Mammary epithelial cell (primary cell): ENCODE measurements at regions of chr2 and their contacts with region 1.

Region 1: DNA sequence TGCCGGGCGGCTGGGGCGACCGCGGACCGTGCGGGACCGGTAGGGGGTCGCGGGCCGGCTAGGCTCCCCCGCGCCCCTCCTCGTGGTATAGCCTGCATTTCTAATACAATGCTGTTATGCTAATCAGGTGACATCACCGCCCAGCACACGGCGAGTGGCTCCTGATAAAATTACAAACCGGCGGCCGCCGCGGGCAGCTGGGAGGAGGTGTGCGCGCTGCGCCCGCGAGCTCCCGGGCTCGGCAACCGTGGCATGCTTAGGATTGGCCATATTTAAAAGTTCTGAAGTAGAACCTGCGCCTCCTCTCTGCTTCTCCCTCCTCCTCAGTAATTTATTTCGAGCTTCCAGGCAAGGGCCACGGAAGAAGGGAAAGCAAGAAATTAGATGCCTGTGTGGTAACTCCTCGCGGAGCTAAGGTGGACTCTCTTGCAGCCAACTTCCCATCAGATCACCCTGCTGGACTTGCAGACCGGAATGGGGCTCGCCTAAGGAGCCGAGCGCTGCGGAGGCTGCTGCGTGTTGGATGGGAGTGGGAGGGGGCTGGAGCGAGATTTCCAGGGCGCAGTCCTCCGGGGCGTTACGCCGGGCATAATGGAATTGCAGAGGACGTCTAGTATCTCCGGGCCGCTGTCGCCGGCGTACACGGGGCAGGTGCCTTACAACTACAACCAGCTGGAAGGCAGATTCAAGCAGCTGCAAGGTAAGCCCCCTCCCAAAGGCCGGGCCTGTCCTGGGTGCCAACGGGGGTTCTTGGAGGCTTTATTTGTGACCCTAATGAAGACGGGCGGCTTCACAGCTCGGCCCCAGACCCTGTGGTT is 102.3 kb downstream of the SPTBN1 start:
- DNase-seq: peak; percentile 79
- H3K4me3 ChIP-seq: peak overlapping the region; percentile 75 to 87 (median 80)
- H3K27ac ChIP-seq: peak overlapping the region; percentile 97
- H3K4me1 ChIP-seq: peaks cover 41% of the 10 kb centered on the region
- H3K27me3 ChIP-seq: no peaks in the 10 kb centered on the region
- CTCF ChIP-seq: no peak

Region 2: DNA sequence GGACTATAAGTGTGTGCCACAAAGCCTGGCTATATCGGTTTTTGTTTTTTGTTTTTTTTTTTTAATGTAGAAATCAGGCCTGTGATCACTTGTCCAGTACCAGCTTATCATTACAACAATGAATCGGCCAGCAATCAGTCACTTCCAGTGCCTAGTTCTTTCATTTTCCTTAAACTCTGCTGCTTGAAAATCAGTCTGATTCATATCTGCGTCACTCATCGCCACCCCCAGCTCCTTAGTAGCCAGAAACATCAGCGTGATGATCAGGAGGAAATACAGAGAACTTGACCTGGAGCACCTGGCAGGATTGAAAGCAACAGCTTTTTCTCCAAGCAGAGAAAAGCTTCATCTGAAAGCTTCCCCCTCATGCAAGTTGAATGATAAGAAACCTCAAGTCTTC is 26.8 kb before region 1 on chr2:
- CTCF ChIA-PET with region 1: no interaction called
- dilution Hi-C with region 1: loop called (anchors 5 kb)
- in situ Hi-C with region 1: no loop called
- intact Hi-C with region 1: loop called (anchors 1 kb)
- DNase-seq: peak; percentile 97
- H3K4me3 ChIP-seq: no peak overlapping the region
- H3K27ac ChIP-seq: peak overlapping the region; percentile 100
- H3K4me1 ChIP-seq: peaks cover 35% of the 10 kb centered on the region
- H3K27me3 ChIP-seq: no peaks in the 10 kb centered on the region
- CTCF ChIP-seq: no peak

Region 3: DNA sequence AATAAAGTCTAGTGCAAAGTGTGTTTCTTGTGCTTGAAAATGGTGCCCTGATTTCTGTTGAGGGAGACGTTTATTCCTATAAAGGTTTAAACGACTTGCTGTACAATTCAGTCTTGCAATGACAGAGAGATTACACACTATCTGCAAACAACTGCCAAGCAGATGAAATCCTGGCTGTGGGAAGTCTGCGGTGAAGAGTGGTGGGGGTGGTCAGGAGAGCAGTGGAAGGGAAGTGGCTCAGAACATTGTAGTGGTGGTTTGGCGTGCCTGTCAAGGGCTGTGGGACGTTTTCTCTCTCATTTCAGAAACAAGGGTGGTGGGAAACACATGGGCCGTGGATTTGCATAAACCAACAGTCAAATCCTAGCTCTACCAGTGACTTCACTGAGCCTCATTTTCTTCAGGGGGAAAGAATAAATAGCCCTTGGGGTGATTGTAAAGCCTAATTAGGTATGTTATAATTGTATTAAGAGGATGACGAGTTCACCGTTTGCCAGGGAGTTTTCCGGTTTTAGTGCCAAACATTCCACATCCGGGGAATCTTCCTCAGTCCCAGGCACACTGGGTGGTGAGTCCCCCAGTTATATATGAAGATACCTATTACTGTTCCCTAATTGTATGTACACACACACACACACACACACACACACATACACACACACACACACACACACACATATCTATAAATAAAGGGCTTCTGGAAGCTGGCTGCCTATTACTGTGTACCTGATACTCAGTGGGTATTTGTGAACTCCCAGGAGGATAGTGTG is 12.7 kb after region 1 on chr2:
- CTCF ChIA-PET with region 1: no interaction called
- dilution Hi-C with region 1: no loop called
- in situ Hi-C with region 1: no loop called
- intact Hi-C with region 1: loop called (anchors 1 kb)
- DNase-seq: peak; percentile 70
- H3K4me3 ChIP-seq: no peak overlapping the region
- H3K27ac ChIP-seq: peak overlapping the region; percentile 96
- H3K4me1 ChIP-seq: peaks cover 68% of the 10 kb centered on the region
- H3K27me3 ChIP-seq: no peaks in the 10 kb centered on the region
- CTCF ChIP-seq: no peak

Region 4: DNA sequence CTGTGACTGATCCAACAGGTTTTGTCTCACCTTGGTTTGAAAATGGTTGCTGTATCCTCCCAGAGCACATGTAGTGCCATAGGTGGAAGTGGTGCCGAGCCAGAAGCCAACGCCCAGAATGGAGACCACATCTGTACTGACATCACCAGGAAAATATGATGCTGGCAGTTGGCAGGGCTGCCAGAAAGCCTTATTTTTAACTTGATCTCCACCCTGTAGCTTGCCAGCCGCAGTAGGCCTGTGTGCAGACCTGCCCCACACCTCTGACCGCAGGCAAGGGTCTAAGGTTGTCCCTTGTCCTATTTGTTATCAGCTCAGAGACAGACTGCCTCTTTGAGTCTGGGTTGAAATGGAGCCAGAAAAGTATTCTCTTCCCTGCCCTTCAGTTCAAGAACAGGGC is 41.5 kb after region 1 on chr2:
- CTCF ChIA-PET with region 1: interaction called, 3 read pairs
- dilution Hi-C with region 1: no loop called
- in situ Hi-C with region 1: no loop called
- intact Hi-C with region 1: loop called (anchors 1 kb)
- DNase-seq: peak; percentile 95
- H3K4me3 ChIP-seq: no peak overlapping the region
- H3K27ac ChIP-seq: peak overlapping the region; percentile 93
- H3K4me1 ChIP-seq: peaks cover 31% of the 10 kb centered on the region
- H3K27me3 ChIP-seq: no peaks in the 10 kb centered on the region
- CTCF ChIP-seq: no peak

Region 5: DNA sequence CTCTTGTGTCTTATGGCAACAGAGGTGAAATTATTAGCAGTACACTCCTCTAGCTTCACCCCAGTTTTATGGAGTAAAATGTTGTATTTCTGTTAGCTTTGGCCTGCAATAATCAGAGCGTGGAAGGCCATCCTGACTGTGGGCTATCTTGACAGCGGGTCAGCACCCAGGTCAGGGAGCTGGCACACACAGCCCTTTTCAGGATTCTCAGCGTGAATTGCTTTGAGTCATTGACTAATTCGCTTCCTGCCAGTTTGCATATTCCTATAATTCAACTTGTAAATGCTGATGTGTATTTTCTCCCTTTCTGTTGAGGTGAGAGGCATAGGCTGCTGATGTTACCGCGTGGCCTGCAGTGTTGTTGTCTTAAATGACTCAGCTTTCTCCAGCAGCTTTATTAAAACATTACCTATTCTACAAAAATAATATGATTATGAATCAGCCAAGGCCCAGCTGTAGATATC is 55.4 kb after region 1 on chr2:
- CTCF ChIA-PET with region 1: no interaction called
- dilution Hi-C with region 1: no loop called
- in situ Hi-C with region 1: no loop called
- intact Hi-C with region 1: loop called (anchors 1 kb)
- DNase-seq: peak; percentile 82
- H3K4me3 ChIP-seq: no peak overlapping the region
- H3K27ac ChIP-seq: peak overlapping the region; percentile 13
- H3K4me1 ChIP-seq: peaks cover 8% of the 10 kb centered on the region
- H3K27me3 ChIP-seq: no peaks in the 10 kb centered on the region
- CTCF ChIP-seq: no peak

Region 6: DNA sequence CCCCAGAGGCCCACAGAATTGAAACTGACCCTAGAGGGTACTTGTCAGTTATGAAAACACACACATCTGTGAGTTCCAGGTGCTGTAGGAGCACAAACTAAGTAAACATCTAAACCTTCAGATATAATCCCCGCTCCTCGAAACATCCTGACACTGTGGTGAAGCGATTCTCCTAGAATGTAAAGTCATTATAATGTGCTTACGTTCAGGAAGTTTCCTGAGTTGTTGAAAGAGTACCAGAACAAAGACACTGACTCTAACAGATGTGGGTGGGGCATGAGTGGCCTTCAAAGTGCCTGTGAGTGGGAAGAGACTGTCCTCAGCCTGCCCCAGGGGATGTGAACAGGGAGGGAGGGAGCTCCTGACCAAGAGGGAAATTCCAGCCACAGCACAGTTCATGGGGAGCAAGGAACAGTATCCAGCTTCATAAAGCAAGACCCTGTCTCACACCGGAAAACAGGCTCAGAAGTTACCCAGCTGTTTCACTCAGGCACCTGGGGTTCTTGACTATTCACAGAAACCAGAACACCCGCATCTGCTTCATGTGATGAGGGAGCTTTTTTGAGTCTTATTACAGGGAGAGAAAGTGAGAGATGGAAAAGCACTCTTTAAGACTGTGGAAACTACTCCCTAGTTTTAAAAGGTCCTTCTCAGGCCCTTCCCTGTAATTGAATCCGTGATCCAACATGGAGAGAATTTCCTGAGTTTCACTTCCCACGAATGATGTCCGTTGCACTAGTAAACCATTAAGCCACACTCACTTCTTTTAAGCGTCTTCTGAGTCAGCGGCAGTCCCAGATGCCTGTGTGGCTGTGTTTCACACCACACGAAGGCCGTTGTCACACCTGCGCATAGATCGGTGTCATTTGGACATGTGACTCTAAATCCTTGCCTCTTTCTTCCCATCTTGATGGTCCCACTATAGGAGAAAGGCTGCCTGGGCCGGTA is 76.4 kb after region 1 on chr2:
- CTCF ChIA-PET with region 1: no interaction called
- dilution Hi-C with region 1: no loop called
- in situ Hi-C with region 1: no loop called
- intact Hi-C with region 1: loop called (anchors 2 kb)
- DNase-seq: peak; percentile 91
- H3K4me3 ChIP-seq: no peak overlapping the region
- H3K27ac ChIP-seq: peak overlapping the region; percentile 21
- H3K4me1 ChIP-seq: peaks cover 30% of the 10 kb centered on the region
- H3K27me3 ChIP-seq: no peaks in the 10 kb centered on the region
- CTCF ChIP-seq: no peak